Breast epithelium (tissue), 4 donors: ENCODE measurements at regions of chr12 and their contacts with region 1.

Region 1: GRCh38 chr12:44015335-44015941 is 179.6 kb downstream of the TMEM117 start:
- DNase-seq: no peak
- H3K4me3 ChIP-seq: no peak overlapping the region
- H3K27ac ChIP-seq: no peak overlapping the region
- H3K4me1 ChIP-seq: no peaks in the 10 kb centered on the region
- H3K27me3 ChIP-seq: no peaks in the 10 kb centered on the region
- CTCF ChIP-seq: peak in 2 of 3 donors; percentile 29 to 30
- POLR2A ChIP-seq: no peak

Region 2: DNA sequence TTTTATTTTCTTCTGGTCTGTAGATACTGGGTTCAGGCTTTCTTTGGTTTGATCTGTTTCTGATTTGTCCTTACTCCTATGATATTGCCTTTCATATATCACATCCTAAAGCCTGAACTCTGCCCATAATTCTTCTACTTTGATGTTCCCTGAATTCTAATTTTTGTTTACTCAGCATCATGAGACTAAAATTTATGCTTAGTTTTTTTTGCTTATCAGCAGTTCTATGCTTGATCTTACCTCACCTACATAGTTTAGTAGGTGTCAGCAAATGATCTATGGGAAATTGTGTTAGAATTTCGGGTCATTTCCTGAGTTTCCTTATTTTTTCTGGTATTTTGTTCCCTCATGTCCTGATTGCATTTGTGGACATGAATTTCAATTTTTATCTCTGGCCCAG is 85.4 kb before region 1 on chr12:
- intact Hi-C with region 1: no loop called
- DNase-seq: no peak
- H3K4me3 ChIP-seq: no peak overlapping the region
- H3K27ac ChIP-seq: no peak overlapping the region
- H3K4me1 ChIP-seq: no peaks in the 10 kb centered on the region
- H3K27me3 ChIP-seq: no peaks in the 10 kb centered on the region
- CTCF ChIP-seq: no peak
- POLR2A ChIP-seq: no peak

Region 3: DNA sequence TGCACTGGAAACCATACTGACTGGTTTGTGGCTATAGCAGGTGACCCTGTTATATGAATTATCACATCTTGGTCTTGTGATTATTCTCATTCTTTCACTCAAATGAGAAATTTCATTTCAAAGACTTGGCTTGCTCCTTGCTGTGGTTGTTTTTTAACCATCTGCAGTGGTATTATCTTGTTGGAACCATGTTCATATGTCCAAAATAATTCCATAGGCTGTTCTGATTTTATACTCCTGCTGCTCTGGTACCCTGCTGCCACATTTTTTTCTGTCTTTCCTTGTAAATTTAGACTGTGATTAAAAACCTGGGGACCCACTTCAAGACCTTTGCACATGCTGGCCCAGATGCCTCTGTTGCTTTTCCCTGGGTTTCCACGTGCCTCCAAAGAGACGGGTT is 10.6 kb after region 1 on chr12:
- intact Hi-C with region 1: loop called (anchors 1 kb)
- DNase-seq: no peak
- H3K4me3 ChIP-seq: no peak overlapping the region
- H3K27ac ChIP-seq: no peak overlapping the region
- H3K4me1 ChIP-seq: no peaks in the 10 kb centered on the region
- H3K27me3 ChIP-seq: no peaks in the 10 kb centered on the region
- CTCF ChIP-seq: no peak
- POLR2A ChIP-seq: no peak